ENCODE measurements at regions of chr10 and their contacts with region 1.

Region 1: GRCh38 chr10:6473901-6474370 is 106.1 kb downstream of the PRKCQ start:
- DNase-seq: peak in 4 of 5 donors; percentile 26 to 65 (median 63)
- H3K4me3 ChIP-seq: peak overlapping the region; percentile 67
- H3K4me3 Mint-ChIP-seq: peak overlapping the region; percentile 69 to 91 (median 89)
- H3K27ac ChIP-seq: peak overlapping the region; percentile 76
- H3K27ac Mint-ChIP-seq: peak overlapping the region; percentile 96 to 99 (median 98)
- H3K4me1 ChIP-seq: peaks cover 32% of the 10 kb centered on the region
- H3K4me1 Mint-ChIP-seq: peaks cover 42 to 75% (median 61%) of the 10 kb centered on the region in 3 donors
- H3K27me3 ChIP-seq: no peaks in the 10 kb centered on the region
- H3K27me3 Mint-ChIP-seq: peaks cover 0 to 1% of the 10 kb centered on the region in 2 donors

Region 2: DNA sequence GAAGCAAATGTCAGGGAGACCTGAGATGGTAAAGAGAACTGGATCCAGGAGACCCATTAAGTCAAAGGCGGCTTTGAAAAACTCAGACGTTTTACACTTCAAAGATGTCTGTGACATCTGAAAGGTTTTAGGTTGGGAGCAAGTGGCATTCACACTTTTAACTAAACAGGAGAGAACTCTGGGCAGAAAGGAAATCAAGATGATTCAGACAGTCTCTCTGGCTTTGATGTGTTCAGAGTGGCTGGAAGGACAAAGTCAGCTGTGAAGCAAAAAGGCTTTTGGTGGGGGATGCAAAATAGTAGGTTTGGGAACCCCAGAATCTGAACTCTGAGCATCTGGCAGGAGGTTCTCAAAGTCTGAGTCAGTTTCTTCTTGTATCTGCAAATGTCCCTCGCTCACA is 39.5 kb after region 1 on chr10:
- CTCF ChIA-PET with region 1: no interaction called
- POLR2A ChIA-PET with region 1: interaction called, 10 read pairs
- DNase-seq: peak in 1 of 5 donors; percentile 36
- H3K4me3 ChIP-seq: no peak overlapping the region
- H3K4me3 Mint-ChIP-seq: peak overlapping the region in 6 of 7 donors; percentile 4 to 67 (median 44)
- H3K27ac ChIP-seq: no peak overlapping the region
- H3K27ac Mint-ChIP-seq: peak overlapping the region; percentile 67 to 94 (median 86)
- H3K4me1 ChIP-seq: peaks cover 43% of the 10 kb centered on the region
- H3K4me1 Mint-ChIP-seq: peaks cover 59 to 84% (median 78%) of the 10 kb centered on the region in 3 donors
- H3K27me3 ChIP-seq: no peaks in the 10 kb centered on the region
- H3K27me3 Mint-ChIP-seq: no peaks in the 10 kb centered on the region

Region 3: GRCh38 chr10:6530211-6530840 is 56.4 kb after region 1 on chr10:
- CTCF ChIA-PET with region 1: interaction called, 11 read pairs
- POLR2A ChIA-PET with region 1: interaction called, 7 read pairs
- DNase-seq: peak; percentile 55 to 85 (median 78)
- H3K4me3 ChIP-seq: peak overlapping the region; percentile 32
- H3K4me3 Mint-ChIP-seq: peak overlapping the region; percentile 65 to 93 (median 89)
- H3K27ac ChIP-seq: peak overlapping the region; percentile 69
- H3K27ac Mint-ChIP-seq: peak overlapping the region; percentile 93 to 100 (median 98)
- H3K4me1 ChIP-seq: peaks cover 72% of the 10 kb centered on the region
- H3K4me1 Mint-ChIP-seq: peaks cover 86 to 96% (median 96%) of the 10 kb centered on the region in 3 donors
- H3K27me3 ChIP-seq: no peaks in the 10 kb centered on the region
- H3K27me3 Mint-ChIP-seq: peaks cover 0 to 2% of the 10 kb centered on the region in 2 donors

Region 4: DNA sequence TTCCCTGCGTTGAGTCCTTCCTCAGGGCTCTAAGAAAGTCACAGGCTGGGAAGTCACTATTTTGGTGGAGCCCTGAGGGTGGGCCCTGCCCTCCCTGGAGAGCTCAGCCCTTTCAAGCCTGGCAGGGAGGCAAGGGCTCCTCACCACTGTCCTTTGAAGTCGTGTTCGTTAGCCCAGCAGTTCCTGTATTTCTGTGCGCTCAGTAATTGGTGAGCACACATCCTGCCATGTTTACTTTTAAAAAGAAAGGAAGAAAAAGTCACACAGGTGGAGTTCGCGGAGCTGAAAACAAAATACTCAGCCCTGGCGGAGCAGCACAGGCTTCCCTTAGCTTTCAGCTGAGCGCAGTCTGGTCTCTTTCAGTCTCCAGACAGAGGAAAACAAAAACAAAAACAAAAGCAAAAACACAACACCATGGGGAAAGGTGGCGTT is 69.1 kb after region 1 on chr10:
- CTCF ChIA-PET with region 1: interaction called, 10 read pairs
- POLR2A ChIA-PET with region 1: no interaction called
- DNase-seq: peak; percentile 18 to 81 (median 70)
- H3K4me3 ChIP-seq: peak overlapping the region; percentile 53
- H3K4me3 Mint-ChIP-seq: peak overlapping the region; percentile 77 to 96 (median 93)
- H3K27ac ChIP-seq: peak overlapping the region; percentile 66
- H3K27ac Mint-ChIP-seq: peak overlapping the region; percentile 96 to 100 (median 100)
- H3K4me1 ChIP-seq: peaks cover 77% of the 10 kb centered on the region
- H3K4me1 Mint-ChIP-seq: peaks cover 70 to 86% (median 77%) of the 10 kb centered on the region in 3 donors
- H3K27me3 ChIP-seq: no peaks in the 10 kb centered on the region
- H3K27me3 Mint-ChIP-seq: peaks cover 0 to 1% of the 10 kb centered on the region in 2 donors